AG04449 (cell line): ENCODE measurements at regions of chr17 and their contacts with region 1.

Region 1: GRCh38 chr17:12545877-12546513 is 119.7 kb upstream of the MYOCD start:
- DNase-seq: no peak
- H3K4me3 ChIP-seq: no peak overlapping the region
- CTCF ChIP-seq: peak; percentile 83

Region 2: DNA sequence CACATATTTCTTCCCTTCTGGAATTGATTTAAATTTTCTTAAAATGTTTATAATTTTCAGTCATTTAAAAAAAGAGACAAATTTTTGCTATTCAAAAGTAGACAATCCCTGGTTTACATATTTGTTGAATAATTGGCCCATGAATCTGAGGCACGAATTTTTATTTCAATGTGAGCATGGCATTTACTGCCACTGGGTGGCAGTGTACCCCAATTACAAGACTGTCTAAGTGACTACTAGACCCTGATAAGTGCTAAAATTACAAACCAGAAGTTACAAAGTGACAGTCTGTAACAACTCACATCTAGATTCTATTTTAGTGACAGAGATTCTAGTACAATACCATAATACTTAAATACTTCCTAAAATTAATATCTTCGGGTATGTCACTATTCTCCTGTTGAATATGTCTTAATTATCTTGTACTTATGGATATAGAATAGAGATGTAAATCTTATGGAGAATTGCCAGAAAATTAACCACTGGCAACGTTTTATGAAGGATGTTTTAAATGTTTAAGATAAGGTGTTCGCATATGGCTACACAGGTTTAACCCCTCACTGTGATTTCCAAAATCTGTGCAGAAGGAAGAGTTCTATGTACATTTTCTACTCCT is 289.5 kb before region 1 on chr17:
- CTCF ChIA-PET with region 1: interaction called, 61 read pairs
- POLR2A ChIA-PET with region 1: no interaction called
- DNase-seq: peak; percentile 53
- H3K4me3 ChIP-seq: no peak overlapping the region
- CTCF ChIP-seq: peak; percentile 47

Region 3: DNA sequence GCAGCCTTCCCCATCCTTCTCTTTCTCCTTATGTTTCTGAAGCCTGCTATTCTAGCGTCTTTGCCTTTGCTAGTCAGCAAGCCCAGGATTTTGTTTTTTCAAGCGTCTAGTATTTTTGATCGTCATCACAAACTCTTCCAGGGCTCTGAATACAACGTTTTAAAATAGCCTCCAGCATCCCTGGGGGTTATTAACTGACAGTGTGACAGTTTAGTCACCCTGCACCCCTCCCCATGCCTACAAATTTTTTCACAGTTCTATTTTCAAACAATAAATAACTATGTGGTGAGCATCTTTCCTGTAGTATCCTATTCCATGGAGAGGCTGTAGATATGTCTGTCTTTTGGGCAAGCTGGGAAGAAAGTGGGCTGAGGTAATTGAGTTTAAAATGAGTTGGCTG is 244.4 kb before region 1 on chr17:
- CTCF ChIA-PET with region 1: no interaction called
- POLR2A ChIA-PET with region 1: no interaction called
- DNase-seq: no peak
- H3K4me3 ChIP-seq: no peak overlapping the region
- CTCF ChIP-seq: no peak

Region 4: GRCh38 chr17:12522743-12523183 is 23.2 kb before region 1 on chr17:
- CTCF ChIA-PET with region 1: interaction called, 44 read pairs
- POLR2A ChIA-PET with region 1: interaction called, 7 read pairs
- DNase-seq: peak; percentile 59
- H3K4me3 ChIP-seq: no peak overlapping the region
- CTCF ChIP-seq: no peak

Region 5: GRCh38 chr17:12575641-12576040 is 29.6 kb after region 1 on chr17:
- CTCF ChIA-PET with region 1: interaction called, 12 read pairs
- POLR2A ChIA-PET with region 1: no interaction called
- DNase-seq: no peak
- H3K4me3 ChIP-seq: no peak overlapping the region
- CTCF ChIP-seq: no peak

Region 6: GRCh38 chr17:12605222-12605621 is 59.2 kb after region 1 on chr17:
- CTCF ChIA-PET with region 1: interaction called, 11 read pairs
- POLR2A ChIA-PET with region 1: no interaction called
- DNase-seq: no peak
- H3K4me3 ChIP-seq: no peak overlapping the region
- CTCF ChIP-seq: no peak

Region 7: DNA sequence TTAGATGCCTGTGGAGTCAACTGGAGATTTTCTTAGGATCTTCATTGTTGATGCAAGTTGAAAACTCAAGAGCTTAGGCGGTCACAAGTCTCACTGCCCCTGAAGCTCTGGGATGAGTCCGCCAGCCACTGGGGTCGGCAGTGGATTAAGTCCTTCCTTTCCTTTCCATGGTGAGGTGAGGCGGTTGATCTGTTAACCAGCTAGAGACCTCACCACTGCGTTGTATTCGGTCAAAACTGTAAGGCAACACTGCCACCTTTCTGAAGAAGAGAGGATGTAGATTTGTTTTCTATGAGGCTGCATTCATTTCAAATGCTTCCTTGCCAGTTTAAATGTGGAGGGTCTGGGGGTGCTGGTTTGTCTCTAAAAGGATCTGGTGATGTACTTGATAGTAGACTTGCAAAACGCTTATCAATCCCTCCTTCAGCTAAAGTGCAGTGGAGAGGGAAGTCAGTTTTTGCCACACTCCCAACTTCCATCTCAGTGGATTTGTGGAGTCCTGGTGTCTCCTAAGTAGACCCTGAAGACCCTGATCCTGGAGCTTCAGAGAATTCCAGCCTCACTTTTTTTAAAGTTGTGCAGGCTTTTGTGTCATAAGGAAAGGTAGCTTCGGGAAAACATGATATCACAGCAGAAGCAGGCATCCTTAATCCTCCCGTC is 121.4 kb after region 1 on chr17:
- CTCF ChIA-PET with region 1: interaction called, 140 read pairs
- POLR2A ChIA-PET with region 1: interaction called, 3 read pairs
- DNase-seq: peak; percentile 45
- H3K4me3 ChIP-seq: peak overlapping the region; percentile 73
- CTCF ChIP-seq: peak; percentile 55